ENCODE measurements at regions of chrX and their contacts with region 1.

Region 1: GRCh38 chrX:78532363-78532762 is 126.8 kb downstream of the RTL3 start:
- DNase-seq: no peak
- ATAC-seq: no peak
- H3K4me3 ChIP-seq: no peak overlapping the region
- H3K27ac ChIP-seq: no peak overlapping the region
- H3K4me1 ChIP-seq: no peaks in the 10 kb centered on the region
- H3K27me3 ChIP-seq: no peaks in the 10 kb centered on the region
- CTCF ChIP-seq: no peak
- POLR2A ChIP-seq: no peak

Region 2: DNA sequence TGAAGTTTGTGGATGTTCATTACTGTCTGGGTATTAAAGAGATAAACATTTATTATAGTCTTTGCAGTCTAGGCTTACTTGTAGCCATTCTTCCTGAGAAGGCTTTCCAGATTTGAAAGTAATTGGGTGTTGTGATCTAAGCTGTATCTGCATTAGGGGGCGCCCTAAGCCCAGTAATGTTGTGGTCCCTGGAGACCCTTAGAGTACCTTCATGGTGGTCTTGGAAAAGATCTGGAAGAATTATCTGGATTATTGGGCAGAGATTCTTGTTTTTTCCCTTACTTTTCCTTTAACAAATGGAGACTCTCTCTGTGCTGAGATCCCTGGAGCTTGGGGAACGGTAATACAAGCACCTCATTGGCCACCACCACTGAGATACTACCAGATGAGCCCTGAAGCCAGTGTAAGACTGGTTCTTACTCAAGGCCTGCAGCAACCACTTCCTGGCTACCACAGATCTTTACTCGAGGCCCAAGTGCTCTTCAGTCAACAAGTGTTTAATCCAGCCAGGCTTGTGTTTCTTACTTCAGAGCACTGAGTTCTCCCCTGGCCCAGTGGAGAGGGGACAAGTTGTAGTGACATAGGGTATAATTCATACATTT is 63.6 kb after region 1 on chrX:
- intact Hi-C with region 1: loop called (anchors 10 kb)
- DNase-seq: no peak
- ATAC-seq: no peak
- H3K4me3 ChIP-seq: no peak overlapping the region
- H3K27ac ChIP-seq: no peak overlapping the region
- H3K4me1 ChIP-seq: no peaks in the 10 kb centered on the region
- H3K27me3 ChIP-seq: no peaks in the 10 kb centered on the region
- CTCF ChIP-seq: no peak
- POLR2A ChIP-seq: no peak

Region 3: GRCh38 chrX:78769946-78770345 is 237.6 kb after region 1 on chrX:
- intact Hi-C with region 1: no loop called
- DNase-seq: no peak
- ATAC-seq: no peak
- H3K4me3 ChIP-seq: no peak overlapping the region
- H3K27ac ChIP-seq: no peak overlapping the region
- H3K4me1 ChIP-seq: no peaks in the 10 kb centered on the region
- H3K27me3 ChIP-seq: no peaks in the 10 kb centered on the region
- CTCF ChIP-seq: no peak
- POLR2A ChIP-seq: no peak